Right ventricle myocardium inferior (tissue), 1 donor: ENCODE measurements at regions of chr5 and their contacts with region 1.

Region 1: DNA sequence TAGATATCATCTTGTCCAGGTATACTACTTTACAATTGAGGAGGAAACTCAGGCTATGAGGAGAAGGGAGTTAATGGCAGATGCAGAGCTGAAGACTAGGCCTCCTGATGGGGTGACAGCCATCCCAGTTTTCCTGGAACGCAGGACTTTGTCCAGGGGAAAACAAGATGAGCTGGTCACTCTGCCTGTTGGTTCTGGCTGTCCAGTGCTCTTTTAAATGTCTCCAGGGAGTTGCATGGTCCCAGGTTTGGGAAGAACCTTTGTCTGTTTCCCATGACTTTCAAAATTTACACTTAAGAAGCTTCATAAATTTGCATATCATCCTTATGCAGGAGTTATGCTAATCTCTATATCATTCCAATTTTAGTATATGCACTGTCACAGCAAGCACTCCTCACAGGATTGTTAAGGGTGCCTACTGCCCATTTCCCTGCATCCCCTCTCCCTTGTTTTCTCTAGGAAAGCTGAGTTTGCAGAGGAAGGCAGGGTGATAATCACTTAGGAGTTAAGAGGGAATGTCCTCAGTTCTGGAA is 14.7 kb upstream of the WNT8A start:
- DNase-seq: no peak
- ATAC-seq: no peak

Region 2: DNA sequence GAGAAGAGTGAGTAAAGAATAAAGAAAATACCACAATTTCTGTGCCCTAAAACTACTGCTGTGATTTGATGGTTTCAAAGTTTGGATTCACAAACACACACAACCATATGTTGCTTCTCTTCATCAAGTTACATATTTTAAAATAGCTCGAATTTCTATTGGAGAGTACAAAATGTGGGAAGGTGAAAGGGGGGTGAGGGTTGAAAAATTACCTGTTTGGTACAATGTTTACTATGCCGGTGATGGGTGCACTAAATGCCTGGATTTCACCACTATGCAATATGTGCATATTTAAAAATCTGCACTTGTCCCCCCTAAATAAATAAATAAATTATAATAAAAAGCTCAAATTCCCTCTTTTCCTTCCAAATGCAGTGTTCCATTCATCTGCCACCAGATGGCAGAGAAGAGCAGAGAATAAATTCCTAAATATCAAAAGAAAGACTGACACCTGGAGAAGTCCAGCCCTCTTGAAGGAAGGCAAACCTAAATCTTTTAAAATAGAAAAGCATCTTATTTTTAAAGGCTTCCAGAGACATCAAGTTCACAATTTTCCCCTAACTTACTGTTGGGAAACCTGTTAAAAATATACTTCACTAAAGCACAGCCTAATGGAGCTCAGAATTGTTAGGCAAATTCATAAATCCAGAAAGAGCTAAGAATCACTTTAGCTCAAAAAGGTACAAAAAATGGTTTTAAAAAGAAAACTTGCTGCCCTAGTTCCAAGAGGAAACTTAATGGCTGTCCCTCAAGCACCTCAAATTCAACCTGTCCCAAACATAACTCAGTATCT is 290.2 kb before region 1 on chr5:
- intact Hi-C with region 1: loop called (anchors 2 kb)
- DNase-seq: no peak
- ATAC-seq: no peak

Region 3: GRCh38 chr5:138213161-138214029 is 144.3 kb after region 1 on chr5 and contains the start of gene CDC23:
- intact Hi-C with region 1: no loop called
- DNase-seq: peak; percentile 93
- ATAC-seq: peak; percentile 97
- total RNA-seq, gene CDC23: 16.0 TPM